ENCODE measurements at regions of chr18 and their contacts with region 1.

Region 1: GRCh38 chr18:5439986-5440696 is 103.7 kb downstream of the EPB41L3 start:
- H3K4me3 Mint-ChIP-seq: no peak overlapping the region
- H3K27ac Mint-ChIP-seq: peak overlapping the region; percentile 79
- H3K4me1 Mint-ChIP-seq: peaks cover 40% of the 10 kb centered on the region
- H3K27me3 Mint-ChIP-seq: no peaks in the 10 kb centered on the region

Region 2: GRCh38 chr18:5237723-5238370 is 202.3 kb before region 1 on chr18:
- intact Hi-C with region 1: loop called (anchors 5 kb)
- H3K4me3 Mint-ChIP-seq: peak overlapping the region; percentile 96
- H3K27ac Mint-ChIP-seq: peak overlapping the region; percentile 100
- H3K4me1 Mint-ChIP-seq: peaks cover 23% of the 10 kb centered on the region
- H3K27me3 Mint-ChIP-seq: peaks cover 12% of the 10 kb centered on the region

Region 3: DNA sequence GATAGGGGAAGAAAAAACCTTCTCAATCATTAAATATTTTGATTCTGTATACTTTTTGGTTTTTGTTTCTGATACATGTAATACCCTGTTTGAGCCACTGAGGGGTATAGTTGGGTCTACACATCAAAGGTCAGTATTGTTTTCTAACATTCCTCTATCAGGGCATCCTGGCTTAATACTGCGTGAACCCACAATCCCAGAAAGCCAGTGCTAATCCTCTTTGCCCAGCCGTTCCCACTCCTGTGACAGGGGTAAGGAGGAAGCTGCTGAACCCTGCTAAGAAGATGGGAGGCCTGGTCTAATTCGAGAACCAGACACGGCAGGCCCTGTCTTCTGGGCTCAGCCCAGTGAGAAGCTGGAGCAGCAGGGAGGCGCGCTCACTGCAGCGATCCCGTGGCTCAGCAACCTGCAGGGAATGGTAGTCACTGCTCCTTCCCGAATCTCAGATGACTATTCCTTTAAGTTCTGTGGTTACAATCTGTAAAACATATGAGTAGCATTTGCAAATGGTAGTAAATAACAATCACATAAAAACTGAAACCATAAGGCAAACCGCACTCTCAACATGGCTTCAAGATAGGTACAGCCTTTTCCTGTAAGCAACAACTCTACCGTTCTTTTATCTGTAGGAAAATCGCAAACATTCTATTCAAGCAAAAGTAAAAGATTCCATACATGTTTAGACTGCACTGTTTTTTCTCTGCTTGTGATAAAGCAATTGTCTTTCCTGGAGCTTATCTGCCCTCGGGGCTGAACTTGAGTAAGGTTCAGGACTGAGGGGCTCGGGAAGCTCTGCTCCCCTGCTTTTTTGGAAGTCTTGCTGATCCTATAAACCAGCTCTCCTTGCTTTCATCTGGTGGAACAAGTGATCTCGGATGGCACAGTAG is 16.7 kb after region 1 on chr18:
- intact Hi-C with region 1: loop called (anchors 2 kb)
- H3K4me3 Mint-ChIP-seq: no peak overlapping the region
- H3K27ac Mint-ChIP-seq: peak overlapping the region; percentile 69
- H3K4me1 Mint-ChIP-seq: peaks cover 38% of the 10 kb centered on the region
- H3K27me3 Mint-ChIP-seq: no peaks in the 10 kb centered on the region